MCF 10A (cell line): ENCODE measurements at regions of chr19 and their contacts with region 1.

Region 1: GRCh38 chr19:18364826-18365528 is 21.0 kb upstream of the GDF15 start:
- DNase-seq: peak; percentile 97
- H3K4me3 Mint-ChIP-seq: peak overlapping the region; percentile 25
- H3K27ac Mint-ChIP-seq: peak overlapping the region; percentile 97
- H3K4me1 Mint-ChIP-seq: peaks cover 19% of the 10 kb centered on the region
- H3K27me3 Mint-ChIP-seq: no peaks in the 10 kb centered on the region
- CTCF ChIP-seq: no peak

Region 2: DNA sequence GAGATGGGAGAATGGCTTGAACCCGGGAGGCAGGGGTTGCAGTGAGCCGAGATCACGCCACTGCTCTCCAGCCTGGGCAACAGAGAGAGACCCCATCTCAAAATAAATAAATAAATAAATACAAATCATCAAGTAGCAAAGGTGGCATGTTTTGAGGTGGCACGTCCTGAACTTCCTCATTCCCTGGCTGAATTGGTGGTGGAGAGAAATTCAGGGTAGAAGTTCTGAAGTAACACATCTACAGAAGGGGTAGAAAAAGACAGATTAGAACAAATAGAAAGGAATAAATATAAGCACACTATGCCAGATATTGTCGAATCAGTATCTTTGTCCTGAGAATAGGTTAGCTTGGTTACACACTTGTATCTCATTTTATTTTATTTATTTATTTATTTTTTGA is 185.0 kb before region 1 on chr19:
- CTCF ChIA-PET with region 1: no interaction called
- POLR2A ChIA-PET with region 1: no interaction called
- intact Hi-C with region 1: no loop called
- DNase-seq: no peak
- H3K4me3 Mint-ChIP-seq: no peak overlapping the region
- H3K27ac Mint-ChIP-seq: no peak overlapping the region
- H3K4me1 Mint-ChIP-seq: no peaks in the 10 kb centered on the region
- H3K27me3 Mint-ChIP-seq: no peaks in the 10 kb centered on the region
- CTCF ChIP-seq: no peak

Region 3: DNA sequence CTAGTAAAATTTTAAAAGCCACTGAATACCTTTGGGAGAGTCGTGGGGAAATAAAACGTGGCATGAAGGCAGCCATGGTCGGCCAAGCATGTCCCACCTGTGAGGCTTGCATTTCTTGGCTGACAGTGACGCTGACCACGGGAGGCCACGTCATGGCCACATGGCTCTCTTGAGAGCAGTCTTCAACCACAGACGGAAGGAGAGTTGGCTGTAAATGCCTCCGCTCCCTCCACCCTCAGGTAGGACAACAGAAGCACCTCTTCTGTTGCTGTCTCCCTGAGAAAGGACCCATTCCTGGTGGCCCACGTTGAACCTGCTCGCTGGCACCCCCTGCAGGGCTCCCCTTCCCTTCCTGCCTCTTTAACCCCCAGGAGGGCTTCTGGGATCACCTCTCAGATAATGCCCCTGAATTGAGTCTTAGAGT is 43.1 kb after region 1 on chr19:
- CTCF ChIA-PET with region 1: interaction called, 11 read pairs
- POLR2A ChIA-PET with region 1: interaction called, 3 read pairs
- intact Hi-C with region 1: no loop called
- DNase-seq: no peak
- H3K4me3 Mint-ChIP-seq: no peak overlapping the region
- H3K27ac Mint-ChIP-seq: no peak overlapping the region
- H3K4me1 Mint-ChIP-seq: peaks cover 6% of the 10 kb centered on the region
- H3K27me3 Mint-ChIP-seq: no peaks in the 10 kb centered on the region
- CTCF ChIP-seq: no peak